Testis (tissue), 5 donors: ENCODE measurements at regions of chr4 and their contacts with region 1.

Region 1: DNA sequence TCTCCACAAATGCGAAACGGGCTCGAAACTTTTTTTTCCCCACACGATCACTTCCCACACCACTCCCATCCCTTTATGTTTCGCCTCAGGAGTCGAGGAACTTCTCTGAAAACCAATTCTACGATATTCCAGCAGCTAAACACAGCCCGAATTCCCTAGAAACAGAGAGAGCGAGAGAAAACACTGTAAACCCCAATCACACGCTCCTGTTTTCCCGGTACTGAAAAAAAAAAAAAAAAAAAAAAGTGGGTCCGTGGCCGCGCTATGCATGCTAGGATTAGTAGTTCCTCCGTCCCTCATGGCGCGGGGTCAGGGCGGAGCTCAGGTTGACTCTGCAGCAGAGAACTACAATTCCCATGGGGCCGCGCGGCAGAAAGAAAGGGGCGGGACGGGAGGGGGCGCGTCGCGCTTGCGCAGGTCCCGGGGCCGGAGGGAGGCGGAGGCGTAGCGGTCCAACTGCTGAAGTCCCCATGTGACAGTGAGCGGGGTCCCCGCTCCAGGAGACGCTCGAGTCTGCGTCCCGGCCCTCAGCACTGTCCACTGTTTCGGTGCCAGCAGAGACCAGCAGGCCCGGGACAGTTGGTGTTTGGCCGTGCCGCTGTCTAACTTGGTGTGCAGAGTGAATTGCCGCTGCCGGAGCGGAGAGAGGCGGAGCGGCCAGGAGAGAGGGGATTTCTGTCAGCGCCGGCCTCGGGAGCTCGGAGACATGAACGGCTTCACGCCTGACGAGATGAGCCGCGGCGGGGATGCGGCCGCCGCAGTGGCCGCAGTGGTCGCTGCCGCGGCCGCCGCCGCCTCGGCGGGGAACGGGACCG is at the start of gene SAP30:
- DNase-seq: peak; percentile 99
- H3K4me3 ChIP-seq: peak within 1 kb of the TSS; percentile 84 to 92
- H3K27ac ChIP-seq: peak within 1 kb of the TSS; percentile 98
- H3K4me1 ChIP-seq: no peaks in the 10 kb centered on the region
- H3K27me3 ChIP-seq: no peaks in the 10 kb centered on the region
- CTCF ChIP-seq: no peak
- POLR2A ChIP-seq: peak; percentile 97
- total RNA-seq, gene SAP30: 49.0 to 57.0 TPM

Region 2: DNA sequence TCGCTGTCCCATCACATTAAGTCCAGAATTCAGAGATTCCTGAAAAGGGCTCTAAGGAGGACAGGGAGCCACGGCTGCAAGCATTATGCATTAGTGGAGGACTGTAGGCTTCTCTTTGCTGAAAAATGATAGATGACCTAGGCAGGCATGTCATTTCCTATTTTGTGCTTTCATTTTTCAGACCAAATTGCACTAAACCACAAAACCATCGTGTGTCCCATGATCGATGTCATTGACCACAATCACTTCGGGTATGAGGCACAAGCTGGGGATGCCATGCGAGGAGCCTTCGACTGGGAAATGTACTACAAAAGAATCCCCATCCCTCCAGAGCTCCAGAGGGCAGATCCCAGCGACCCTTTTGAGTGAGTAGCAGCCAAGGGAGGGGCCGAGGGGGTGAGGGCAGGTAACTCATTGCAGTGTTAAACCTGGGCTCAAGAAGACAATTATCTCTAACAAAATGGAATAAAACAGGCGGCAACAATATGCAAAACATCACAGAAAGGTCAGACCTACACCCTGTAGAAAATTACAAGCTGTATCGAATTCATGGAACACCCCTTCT is 557.2 kb before region 1 on chr4:
- intact Hi-C with region 1: no loop called
- DNase-seq: no peak
- H3K4me3 ChIP-seq: no peak overlapping the region
- H3K27ac ChIP-seq: no peak overlapping the region
- H3K4me1 ChIP-seq: no peaks in the 10 kb centered on the region
- H3K27me3 ChIP-seq: no peaks in the 10 kb centered on the region
- CTCF ChIP-seq: no peak
- POLR2A ChIP-seq: no peak

Region 3: DNA sequence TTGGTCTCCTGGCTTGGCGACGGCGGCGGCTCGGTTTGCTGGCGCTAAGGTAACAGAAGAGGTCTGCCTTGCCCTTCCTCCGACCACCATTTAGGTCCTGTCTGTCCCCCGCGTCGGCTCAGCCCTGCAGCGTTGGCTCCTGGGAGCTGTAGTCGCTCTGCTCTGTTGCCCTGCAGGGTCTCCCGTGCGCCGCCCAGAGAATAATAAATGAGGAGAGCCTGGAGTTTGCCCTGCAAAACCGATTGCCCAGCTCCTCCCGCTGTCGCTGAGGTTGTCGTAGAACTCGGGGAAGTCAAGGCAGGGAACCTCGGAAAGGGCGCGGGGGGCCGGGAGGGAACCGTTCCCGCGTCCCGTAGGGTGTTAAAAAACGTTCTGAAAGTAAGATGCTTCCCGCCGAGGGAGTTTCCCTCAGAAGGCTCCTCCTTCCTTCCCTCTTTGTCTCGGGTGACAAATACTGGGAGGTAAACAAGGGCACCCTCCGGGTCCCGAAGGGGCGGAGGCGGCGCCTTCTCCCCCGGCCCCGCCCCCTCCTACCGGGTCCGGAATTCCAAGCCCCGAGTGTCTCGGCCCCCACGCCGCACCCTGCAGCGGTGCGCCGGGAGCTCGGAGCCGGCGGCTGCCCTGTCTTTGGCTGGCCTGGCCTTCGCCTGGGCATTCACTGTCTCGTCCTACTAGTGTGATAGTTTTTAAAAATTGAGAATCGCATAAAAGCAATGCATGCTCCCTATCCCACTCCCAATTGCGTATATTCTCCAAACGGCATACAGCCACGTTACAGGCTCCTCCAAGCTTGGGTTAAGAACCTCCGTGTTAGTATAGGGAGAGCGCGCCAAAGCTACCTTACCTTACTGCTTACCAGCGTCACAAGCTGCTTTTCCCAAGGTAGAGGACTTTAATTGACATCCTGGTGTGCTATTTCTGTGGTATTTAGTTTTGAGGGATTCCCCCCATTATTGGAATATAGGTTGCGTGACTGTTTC is 35.6 kb before region 1 on chr4:
- intact Hi-C with region 1: loop called (anchors 5 kb)
- DNase-seq: peak; percentile 65
- H3K4me3 ChIP-seq: peak overlapping the region; percentile 98
- H3K27ac ChIP-seq: peak overlapping the region; percentile 100
- H3K4me1 ChIP-seq: peaks cover 13% of the 10 kb centered on the region
- H3K27me3 ChIP-seq: no peaks in the 10 kb centered on the region
- CTCF ChIP-seq: no peak
- POLR2A ChIP-seq: no peak